Right ventricle myocardium superior (tissue), 1 donor: ENCODE measurements at regions of chr1 and their contacts with region 1.

Region 1: GRCh38 chr1:178055779-178056471 is 38.0 kb upstream of the RASAL2 start:
- DNase-seq: peak; percentile 57
- ATAC-seq: peak; percentile 73

Region 2: DNA sequence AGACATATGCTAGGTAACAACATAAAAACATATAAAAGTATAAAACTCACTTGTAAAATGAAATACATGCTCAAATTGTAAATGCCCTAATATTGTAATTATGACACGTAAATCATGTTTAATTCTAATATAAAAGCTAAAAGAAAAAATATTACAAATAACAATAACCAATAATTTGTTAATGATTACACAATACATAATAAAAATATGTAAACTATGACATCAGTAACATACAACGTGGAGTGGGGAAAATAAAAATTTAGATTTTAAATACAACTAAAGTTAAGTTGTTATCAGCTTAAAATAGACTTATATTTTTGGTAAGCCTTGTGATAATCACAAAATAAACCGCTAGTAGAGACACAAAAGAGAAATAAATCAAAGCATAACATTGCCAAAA is 508.7 kb before region 1 on chr1:
- intact Hi-C with region 1: no loop called
- DNase-seq: no peak
- ATAC-seq: no peak

Region 3: DNA sequence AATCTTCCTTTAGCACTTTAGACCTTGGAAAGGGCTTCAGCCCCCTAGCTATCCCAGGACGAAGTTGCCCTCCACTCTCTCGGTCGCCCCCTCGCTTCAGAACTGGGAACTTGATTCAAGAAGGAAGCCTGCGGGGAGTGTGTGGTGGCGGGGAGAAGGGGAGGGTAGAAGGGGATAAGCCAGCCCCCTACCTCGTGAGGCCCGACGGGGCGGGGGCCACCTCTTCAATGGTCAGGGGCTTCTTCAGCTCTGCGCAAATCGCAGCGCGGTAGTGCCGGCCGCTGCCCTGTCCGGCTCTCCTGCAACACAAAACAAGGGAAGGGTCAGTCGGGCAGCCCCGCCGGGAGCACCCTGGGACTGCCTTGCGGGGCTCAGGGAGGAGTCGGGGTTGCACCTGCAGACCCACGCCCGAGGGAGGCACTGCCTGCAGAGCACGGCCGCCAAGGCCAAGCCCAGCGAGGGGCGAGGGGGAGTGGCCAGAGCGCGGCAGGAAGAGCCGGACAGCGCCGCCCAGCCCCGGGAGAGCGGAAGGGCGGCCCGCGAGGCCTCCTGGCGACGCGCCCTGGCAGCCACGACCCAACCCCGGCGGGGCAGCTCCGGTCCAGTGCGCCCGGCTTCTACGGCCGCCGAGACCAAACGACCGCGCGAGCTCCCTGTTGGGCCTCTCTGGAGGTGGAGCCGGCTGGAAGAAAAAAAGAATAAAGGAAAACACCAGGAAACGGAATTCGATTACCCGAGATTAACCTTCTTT is 18.2 kb before region 1 on chr1:
- intact Hi-C with region 1: loop called (anchors 1 kb)
- DNase-seq: peak; percentile 93
- ATAC-seq: peak; percentile 98

Region 4: GRCh38 chr1:178189814-178190213 is 133.9 kb after region 1 on chr1:
- intact Hi-C with region 1: loop called (anchors 5 kb)
- DNase-seq: no peak
- ATAC-seq: peak; percentile 76